Psoas muscle (tissue), 8 donors: ENCODE measurements at regions of chr12 and their contacts with region 1.

Region 1: GRCh38 chr12:133010657-133011297 is 24.6 kb downstream of the ZNF26 start:
- DNase-seq: no peak
- ATAC-seq: no peak
- H3K4me3 ChIP-seq: no peak overlapping the region
- H3K27ac ChIP-seq: no peak overlapping the region
- H3K4me1 ChIP-seq: no peaks in the 10 kb centered on the region
- H3K27me3 ChIP-seq: no peaks in the 10 kb centered on the region
- CTCF ChIP-seq: no peak

Region 2: DNA sequence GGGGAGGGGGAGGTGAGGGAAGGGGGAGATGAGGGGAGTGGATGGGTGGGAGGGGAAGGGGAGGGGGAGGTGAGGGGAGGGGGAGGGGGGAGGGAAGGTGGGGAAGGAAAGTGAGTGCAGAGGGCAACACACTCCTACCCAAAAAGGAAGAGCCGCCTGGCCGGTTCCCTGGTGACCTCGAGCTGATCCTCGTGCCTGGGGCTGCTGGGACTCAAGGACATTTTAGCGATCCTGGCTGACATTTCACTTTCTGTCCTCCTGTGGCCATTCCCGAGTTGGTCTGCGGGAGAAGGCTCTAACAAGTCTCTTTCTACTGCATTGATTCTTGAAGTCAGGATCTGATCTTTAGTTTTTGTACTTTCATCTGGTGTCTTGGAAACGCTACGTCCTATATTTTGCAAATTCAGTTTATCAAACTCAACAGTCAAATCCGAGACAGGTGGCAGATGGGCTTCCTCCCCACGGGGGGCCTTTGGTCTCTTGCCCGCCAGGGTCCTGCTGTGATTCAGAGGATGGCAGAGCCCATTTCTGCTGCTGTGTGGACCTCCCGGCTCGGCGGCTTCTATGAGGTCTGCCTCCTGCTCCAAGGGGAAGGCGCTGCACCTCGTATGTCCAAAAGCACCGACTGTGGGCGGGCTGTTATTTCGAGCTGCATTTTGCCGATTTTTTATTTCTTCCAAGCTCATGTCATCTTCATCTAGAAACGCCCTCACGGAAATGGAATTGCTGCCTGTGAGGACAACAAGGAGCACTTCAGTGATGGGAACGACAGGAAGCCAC is 281.0 kb before region 1 on chr12:
- intact Hi-C with region 1: no loop called
- DNase-seq: no peak
- ATAC-seq: no peak
- H3K4me3 ChIP-seq: no peak overlapping the region
- H3K27ac ChIP-seq: no peak overlapping the region
- H3K4me1 ChIP-seq: no peaks in the 10 kb centered on the region
- H3K27me3 ChIP-seq: no peaks in the 10 kb centered on the region
- CTCF ChIP-seq: no peak

Region 3: GRCh38 chr12:132921685-132922084 is 89.1 kb before region 1 on chr12:
- intact Hi-C with region 1: loop called in 1 of 2 experiments (anchors 10 kb)
- DNase-seq: no peak
- ATAC-seq: no peak
- H3K4me3 ChIP-seq: no peak overlapping the region
- H3K27ac ChIP-seq: no peak overlapping the region
- H3K4me1 ChIP-seq: no peaks in the 10 kb centered on the region
- H3K27me3 ChIP-seq: no peaks in the 10 kb centered on the region
- CTCF ChIP-seq: no peak